ENCODE measurements at regions of chr1 and their contacts with region 1.

Region 1: DNA sequence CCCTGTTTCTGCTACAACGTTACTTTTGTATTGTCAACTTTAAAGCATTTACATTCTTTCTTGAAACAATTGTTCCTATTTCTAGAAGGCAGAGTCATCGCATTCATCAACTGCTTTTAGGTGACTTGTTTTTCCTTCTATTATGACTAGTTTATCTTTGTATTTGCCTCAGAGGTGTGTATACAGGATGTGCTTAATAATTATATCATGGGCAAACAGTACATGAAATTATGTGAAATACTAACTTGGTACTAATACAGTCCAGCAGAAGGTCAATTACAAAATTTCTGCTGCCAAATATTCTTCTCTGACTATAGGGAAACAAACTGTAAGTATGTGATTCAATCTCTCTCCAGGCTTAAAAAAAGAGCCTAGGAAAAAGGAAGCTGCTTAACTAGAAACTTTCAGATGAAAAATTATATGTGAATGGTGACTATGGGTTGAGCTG is 101.6 kb downstream of the C4BPA start:
- DNase-seq: peak; percentile 24 to 46 (median 42)
- H3K4me3 ChIP-seq: peak overlapping the region in 1 of 3 experiments; percentile 57
- H3K4me3 Mint-ChIP-seq: peak overlapping the region in 1 of 2 donors; percentile 53
- H3K27ac ChIP-seq: peak overlapping the region; percentile 46 to 88
- H3K27ac Mint-ChIP-seq: peak overlapping the region; percentile 91 to 98 (median 96)
- H3K4me1 ChIP-seq: peaks cover 8 to 26% of the 10 kb centered on the region in 2 donors
- H3K4me1 Mint-ChIP-seq: peaks cover 26% of the 10 kb centered on the region
- H3K27me3 ChIP-seq: no peaks in the 10 kb centered on the region
- H3K27me3 Mint-ChIP-seq: peaks cover 0 to 5% (median 4%) of the 10 kb centered on the region in 3 donors
- CTCF ChIP-seq: no peak

Region 2: DNA sequence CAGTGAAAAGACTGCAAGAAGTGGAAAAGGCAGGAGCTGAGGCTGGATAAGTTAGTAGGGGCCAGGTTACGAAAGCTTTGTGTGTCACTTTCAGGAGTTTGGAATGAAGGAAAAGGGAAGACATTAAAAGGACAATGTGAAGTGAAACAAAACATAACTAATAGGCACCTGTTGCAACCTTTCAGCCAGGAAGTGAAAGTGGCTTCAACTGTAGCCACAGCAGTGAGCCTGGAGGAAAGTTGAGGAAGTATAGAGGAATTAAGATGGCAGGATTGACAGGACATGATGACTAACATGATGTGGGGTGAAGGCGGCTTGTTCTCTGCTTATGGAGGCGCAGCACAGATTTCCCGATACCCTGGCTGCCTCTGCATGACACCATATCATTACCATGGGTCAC is 32.8 kb before region 1 on chr1:
- intact Hi-C with region 1: loop called in 1 of 2 experiments (anchors 1 kb)
- DNase-seq: peak; percentile 81 to 95 (median 89)
- H3K4me3 ChIP-seq: peak overlapping the region in 1 of 3 experiments; percentile 46
- H3K4me3 Mint-ChIP-seq: peak overlapping the region; percentile 21 to 68
- H3K27ac ChIP-seq: peak overlapping the region; percentile 18 to 73
- H3K27ac Mint-ChIP-seq: peak overlapping the region; percentile 91 to 97 (median 91)
- H3K4me1 ChIP-seq: peaks cover 21 to 28% of the 10 kb centered on the region in 2 donors
- H3K4me1 Mint-ChIP-seq: peaks cover 24% of the 10 kb centered on the region
- H3K27me3 ChIP-seq: no peaks in the 10 kb centered on the region
- H3K27me3 Mint-ChIP-seq: peaks cover 0 to 2% (median 0%) of the 10 kb centered on the region in 3 donors
- CTCF ChIP-seq: no peak

Region 3: DNA sequence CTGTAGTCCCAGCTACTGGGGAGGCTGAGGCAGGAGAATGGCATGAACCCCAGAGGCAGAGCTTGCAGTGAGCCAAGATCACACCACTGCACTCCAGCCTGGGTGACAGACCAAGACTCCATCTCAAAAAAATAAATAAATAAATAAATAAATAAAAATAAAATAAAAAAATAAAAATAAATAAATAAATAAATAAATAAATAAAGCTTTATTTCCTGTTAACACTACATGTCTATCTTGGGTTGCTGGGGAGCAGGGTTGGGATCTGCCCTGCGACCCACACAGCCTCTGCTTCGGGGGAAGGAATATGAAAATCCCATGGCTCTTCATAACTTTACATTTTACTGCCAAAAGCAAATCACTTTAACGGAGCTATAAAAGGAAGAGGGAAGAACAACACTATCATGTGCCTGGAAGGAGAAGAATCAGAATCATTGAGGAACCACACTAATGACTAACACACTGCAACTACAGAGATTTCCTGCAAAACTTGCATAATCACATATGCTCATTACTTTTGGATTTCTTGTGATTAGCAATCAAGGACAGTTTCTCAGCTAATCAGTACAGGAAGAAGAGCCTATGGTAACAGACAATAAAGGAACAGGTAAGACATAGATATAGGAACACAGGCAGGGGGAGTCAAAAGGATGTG is 43.0 kb after region 1 on chr1:
- intact Hi-C with region 1: loop called in 1 of 2 experiments (anchors 5 kb)
- DNase-seq: peak; percentile 81 to 96 (median 93)
- H3K4me3 ChIP-seq: peak overlapping the region in 1 of 3 experiments; percentile 51
- H3K4me3 Mint-ChIP-seq: peak overlapping the region; percentile 43 to 88
- H3K27ac ChIP-seq: peak overlapping the region; percentile 76 to 81
- H3K27ac Mint-ChIP-seq: peak overlapping the region; percentile 89 to 97 (median 93)
- H3K4me1 ChIP-seq: peaks cover 42 to 58% of the 10 kb centered on the region in 2 donors
- H3K4me1 Mint-ChIP-seq: peaks cover 53% of the 10 kb centered on the region
- H3K27me3 ChIP-seq: peaks cover 0 to 2% of the 10 kb centered on the region in 2 donors
- H3K27me3 Mint-ChIP-seq: peaks cover 2 to 8% (median 4%) of the 10 kb centered on the region in 3 donors
- CTCF ChIP-seq: no peak

Region 4: GRCh38 chr1:208476340-208477041 is 1270.9 kb after region 1 on chr1:
- intact Hi-C with region 1: no loop called
- DNase-seq: no peak
- H3K4me3 ChIP-seq: no peak overlapping the region
- H3K4me3 Mint-ChIP-seq: no peak overlapping the region
- H3K27ac ChIP-seq: no peak overlapping the region
- H3K27ac Mint-ChIP-seq: no peak overlapping the region
- H3K4me1 ChIP-seq: no peaks in the 10 kb centered on the region
- H3K4me1 Mint-ChIP-seq: no peaks in the 10 kb centered on the region
- H3K27me3 ChIP-seq: no peaks in the 10 kb centered on the region
- H3K27me3 Mint-ChIP-seq: peaks cover under 1 to 8% (median 5%) of the 10 kb centered on the region in 3 donors
- CTCF ChIP-seq: no peak